ENCODE measurements at regions of chr2 and their contacts with region 1.

Region 1: DNA sequence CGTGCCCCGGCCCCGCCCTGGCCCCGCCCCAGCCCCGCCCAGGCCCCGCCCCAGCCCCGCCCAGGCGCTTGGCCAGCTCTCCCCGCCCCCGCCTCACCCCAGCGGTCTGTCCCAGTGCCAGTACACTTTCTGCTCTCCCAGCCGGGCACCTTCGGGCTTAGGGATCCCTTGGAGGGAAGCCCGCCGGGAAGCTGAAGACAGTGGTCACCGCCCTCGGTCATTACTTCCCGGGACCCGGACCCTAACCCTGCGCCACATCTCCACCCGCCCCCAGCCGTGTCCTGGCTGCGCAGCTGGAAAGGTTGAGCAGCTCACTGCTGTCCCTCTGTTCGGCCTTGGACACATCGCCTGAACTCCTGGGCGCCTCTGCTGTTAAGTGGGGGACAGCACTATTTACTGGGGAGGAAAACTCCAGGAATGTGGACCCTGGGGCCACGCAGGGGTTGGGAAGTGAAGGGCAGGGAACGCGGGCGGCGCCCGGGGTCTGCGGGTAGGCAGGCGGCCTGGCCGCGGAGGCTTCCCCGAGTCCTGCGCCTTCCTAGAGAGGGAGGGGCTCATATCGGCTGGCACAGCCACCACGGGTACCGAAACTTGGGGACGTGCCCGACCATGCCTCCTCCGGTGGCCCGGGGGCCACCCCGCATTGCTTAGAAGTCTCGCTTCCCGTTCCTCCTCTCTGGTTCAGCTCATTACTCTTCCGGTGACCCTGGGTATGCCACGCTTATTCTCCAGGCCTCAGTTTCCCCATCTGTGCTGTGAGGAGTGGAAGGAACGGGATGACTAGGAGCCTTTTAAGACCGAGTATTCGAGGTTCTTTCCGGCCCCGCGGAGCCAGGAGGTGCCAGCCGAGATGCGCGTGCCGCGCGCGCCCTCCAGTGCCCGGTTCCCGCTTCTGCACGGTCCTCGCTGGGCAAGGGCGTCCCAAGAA is 121.0 kb downstream of the GYPC start:
- DNase-seq: peak; percentile 65 to 79 (median 79)
- H3K4me3 ChIP-seq: peak overlapping the region; percentile 76 to 88
- H3K4me3 Mint-ChIP-seq: peak overlapping the region; percentile 89 to 97 (median 93)
- H3K27ac ChIP-seq: peak overlapping the region; percentile 42
- H3K27ac Mint-ChIP-seq: peak overlapping the region; percentile 19 to 92 (median 77)
- H3K4me1 ChIP-seq: peaks cover 5% of the 10 kb centered on the region
- H3K4me1 Mint-ChIP-seq: peaks cover 9 to 20% (median 11%) of the 10 kb centered on the region in 4 donors
- H3K27me3 ChIP-seq: no peaks in the 10 kb centered on the region
- H3K27me3 Mint-ChIP-seq: peaks cover 7% of the 10 kb centered on the region in 2 donors

Region 2: GRCh38 chr2:126359494-126359893 is 417.5 kb before region 1 on chr2:
- CTCF ChIA-PET with region 1: no interaction called
- POLR2A ChIA-PET with region 1: no interaction called
- intact Hi-C with region 1: loop called (anchors 1 kb)
- DNase-seq: peak in 2 of 5 donors; percentile 2 to 11
- H3K4me3 ChIP-seq: no peak overlapping the region
- H3K4me3 Mint-ChIP-seq: no peak overlapping the region
- H3K27ac ChIP-seq: no peak overlapping the region
- H3K27ac Mint-ChIP-seq: no peak overlapping the region
- H3K4me1 ChIP-seq: no peaks in the 10 kb centered on the region
- H3K4me1 Mint-ChIP-seq: no peaks in the 10 kb centered on the region
- H3K27me3 ChIP-seq: no peaks in the 10 kb centered on the region
- H3K27me3 Mint-ChIP-seq: peaks cover 0 to 4% of the 10 kb centered on the region in 2 donors

Region 3: DNA sequence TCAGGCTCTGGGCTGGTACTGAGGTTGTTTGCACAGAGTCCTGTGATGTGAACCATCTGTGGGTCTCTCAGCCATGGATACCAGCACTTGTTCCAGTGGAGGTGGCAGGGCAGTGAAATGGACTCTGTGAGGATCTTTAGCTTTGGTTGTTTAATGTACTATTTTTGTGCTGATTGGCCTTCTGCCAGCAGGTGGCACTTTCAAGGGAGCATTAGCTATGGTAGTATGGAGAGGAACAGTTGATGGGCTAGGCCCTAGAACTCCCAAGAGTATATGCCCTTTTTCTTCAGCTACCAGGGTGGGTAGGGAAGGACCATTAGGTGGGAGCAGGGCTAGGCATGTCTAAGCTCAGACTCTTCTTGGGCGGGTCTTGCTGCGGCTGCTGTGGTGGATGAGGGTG is 378.0 kb before region 1 on chr2:
- CTCF ChIA-PET with region 1: interaction called, 13 read pairs
- POLR2A ChIA-PET with region 1: no interaction called
- intact Hi-C with region 1: loop called (anchors 1 kb)
- DNase-seq: no peak
- H3K4me3 ChIP-seq: no peak overlapping the region
- H3K4me3 Mint-ChIP-seq: no peak overlapping the region
- H3K27ac ChIP-seq: no peak overlapping the region
- H3K27ac Mint-ChIP-seq: no peak overlapping the region
- H3K4me1 ChIP-seq: no peaks in the 10 kb centered on the region
- H3K4me1 Mint-ChIP-seq: no peaks in the 10 kb centered on the region
- H3K27me3 ChIP-seq: no peaks in the 10 kb centered on the region
- H3K27me3 Mint-ChIP-seq: peaks cover 11 to 13% of the 10 kb centered on the region in 2 donors

Region 4: GRCh38 chr2:126518195-126518594 is 258.8 kb before region 1 on chr2:
- CTCF ChIA-PET with region 1: interaction called, 12 read pairs
- POLR2A ChIA-PET with region 1: no interaction called
- intact Hi-C with region 1: no loop called
- DNase-seq: no peak
- H3K4me3 ChIP-seq: no peak overlapping the region
- H3K4me3 Mint-ChIP-seq: no peak overlapping the region
- H3K27ac ChIP-seq: no peak overlapping the region
- H3K27ac Mint-ChIP-seq: no peak overlapping the region
- H3K4me1 ChIP-seq: no peaks in the 10 kb centered on the region
- H3K4me1 Mint-ChIP-seq: no peaks in the 10 kb centered on the region
- H3K27me3 ChIP-seq: no peaks in the 10 kb centered on the region
- H3K27me3 Mint-ChIP-seq: peaks cover 4 to 6% of the 10 kb centered on the region in 2 donors

Region 5: GRCh38 chr2:126634273-126634861 is 142.6 kb before region 1 on chr2:
- CTCF ChIA-PET with region 1: interaction called, 6 read pairs
- POLR2A ChIA-PET with region 1: no interaction called
- intact Hi-C with region 1: loop called (anchors 1 kb)
- DNase-seq: peak in 4 of 5 donors; percentile 9 to 19 (median 14)
- H3K4me3 ChIP-seq: no peak overlapping the region
- H3K4me3 Mint-ChIP-seq: no peak overlapping the region
- H3K27ac ChIP-seq: no peak overlapping the region
- H3K27ac Mint-ChIP-seq: no peak overlapping the region
- H3K4me1 ChIP-seq: no peaks in the 10 kb centered on the region
- H3K4me1 Mint-ChIP-seq: peaks cover 0 to 4% (median 3%) of the 10 kb centered on the region in 4 donors
- H3K27me3 ChIP-seq: peaks cover 3% of the 10 kb centered on the region
- H3K27me3 Mint-ChIP-seq: peaks cover 0 to 3% of the 10 kb centered on the region in 2 donors

Region 6: DNA sequence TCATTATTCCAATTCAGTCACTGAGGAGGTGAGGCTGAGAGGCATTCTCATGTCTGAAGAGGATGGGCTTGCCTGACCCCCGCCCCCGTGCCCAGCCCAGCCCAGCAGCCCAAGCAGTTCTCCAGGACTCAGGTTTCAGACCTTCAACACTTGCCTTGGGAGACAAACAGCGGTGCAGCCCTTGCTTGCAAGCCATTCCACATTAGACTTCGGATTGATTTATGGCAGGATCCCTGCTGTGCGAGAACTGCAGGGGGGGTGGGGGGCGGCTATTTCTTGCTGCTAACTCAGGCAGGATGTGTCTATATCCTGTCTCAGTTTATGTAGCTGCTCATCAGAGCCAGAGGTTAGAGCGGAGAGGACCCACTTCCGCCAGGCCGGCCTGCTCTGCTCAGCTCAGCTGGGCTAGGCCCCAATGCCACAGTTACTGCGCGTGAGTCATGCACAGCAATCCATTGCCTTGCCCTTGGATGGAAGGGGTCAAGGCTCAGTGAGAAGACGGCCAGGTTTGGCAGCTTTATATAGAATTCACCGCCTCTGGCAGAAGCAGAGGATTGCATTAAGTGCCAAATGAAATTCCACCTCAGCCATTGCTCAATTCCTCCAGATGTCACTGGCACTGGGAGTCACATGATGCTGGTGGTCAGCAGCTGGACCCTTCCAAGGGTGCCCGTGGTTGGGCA is 119.2 kb before region 1 on chr2:
- CTCF ChIA-PET with region 1: interaction called, 12 read pairs
- POLR2A ChIA-PET with region 1: interaction called, 12 read pairs
- intact Hi-C with region 1: loop called (anchors 2 kb)
- DNase-seq: peak; percentile 61 to 87 (median 74)
- H3K4me3 ChIP-seq: peak overlapping the region; percentile 79 to 96
- H3K4me3 Mint-ChIP-seq: peak overlapping the region; percentile 96 to 99 (median 98)
- H3K27ac ChIP-seq: peak overlapping the region; percentile 78
- H3K27ac Mint-ChIP-seq: peak overlapping the region; percentile 96 to 99 (median 97)
- H3K4me1 ChIP-seq: peaks cover 58% of the 10 kb centered on the region
- H3K4me1 Mint-ChIP-seq: peaks cover 42 to 77% (median 63%) of the 10 kb centered on the region in 4 donors
- H3K27me3 ChIP-seq: no peaks in the 10 kb centered on the region
- H3K27me3 Mint-ChIP-seq: no peaks in the 10 kb centered on the region

Region 7: DNA sequence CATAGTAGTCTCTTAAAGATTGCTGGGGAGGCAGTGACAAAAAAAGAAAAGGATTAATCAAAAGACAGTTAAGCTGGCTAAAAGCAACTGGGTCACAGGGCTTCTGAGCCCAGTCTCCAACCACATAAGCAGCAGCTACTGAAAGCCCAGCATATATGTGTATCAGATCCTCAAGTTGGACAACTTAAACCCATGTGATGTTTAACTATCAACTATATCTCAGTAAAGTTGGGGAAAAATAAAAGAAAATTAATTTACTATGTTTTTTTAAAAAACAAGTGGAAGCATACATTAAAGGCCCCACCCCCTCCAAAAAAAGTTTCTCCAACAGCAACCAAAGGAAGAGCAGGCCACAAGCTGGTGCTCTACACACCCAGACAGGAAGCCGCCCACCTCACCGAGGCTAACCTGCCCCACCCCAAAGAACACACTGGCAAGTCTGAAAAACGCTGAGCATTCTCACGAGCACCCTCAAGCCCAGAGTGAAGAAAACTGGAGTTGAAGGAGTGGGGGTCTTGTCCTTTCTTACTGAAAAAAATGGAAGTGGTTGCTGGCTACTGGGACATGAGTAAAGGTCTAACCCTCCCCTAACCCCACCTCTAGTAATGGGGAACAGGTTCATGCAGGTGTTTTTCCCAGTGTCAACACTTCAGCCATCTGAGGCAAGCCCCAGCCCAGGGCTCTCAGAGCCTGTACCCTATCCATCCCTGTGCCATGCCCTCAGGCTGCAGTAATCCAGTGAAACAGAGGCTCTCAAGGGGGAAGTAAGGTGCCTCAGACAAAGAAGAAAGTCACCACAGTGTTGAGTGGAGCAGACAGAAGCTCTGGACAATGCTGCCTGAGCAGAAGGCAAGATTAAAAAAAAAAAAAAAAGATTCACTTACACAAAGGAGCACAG is 14.7 kb before region 1 on chr2:
- CTCF ChIA-PET with region 1: interaction called, 22 read pairs
- POLR2A ChIA-PET with region 1: no interaction called
- intact Hi-C with region 1: no loop called
- DNase-seq: peak; percentile 27 to 67 (median 59)
- H3K4me3 ChIP-seq: peak overlapping the region in 1 of 2 donors; percentile 11
- H3K4me3 Mint-ChIP-seq: peak overlapping the region; percentile 59 to 82 (median 72)
- H3K27ac ChIP-seq: peak overlapping the region; percentile 36
- H3K27ac Mint-ChIP-seq: peak overlapping the region; percentile 81 to 96 (median 90)
- H3K4me1 ChIP-seq: peaks cover 46% of the 10 kb centered on the region
- H3K4me1 Mint-ChIP-seq: peaks cover 34 to 75% (median 52%) of the 10 kb centered on the region in 4 donors
- H3K27me3 ChIP-seq: no peaks in the 10 kb centered on the region
- H3K27me3 Mint-ChIP-seq: no peaks in the 10 kb centered on the region